CD14-positive monocyte (primary cell): ENCODE measurements at regions of chr14 and their contacts with region 1.

Region 1: GRCh38 chr14:91286530-91286937 is 42.0 kb upstream of the GPR68 start:
- DNase-seq: peak; percentile 49 to 63 (median 62)
- H3K4me3 ChIP-seq: no peak overlapping the region
- H3K4me3 Mint-ChIP-seq: no peak overlapping the region
- H3K27ac ChIP-seq: peak overlapping the region in 1 of 2 donors; percentile 17
- H3K27ac Mint-ChIP-seq: peak overlapping the region in 1 of 7 donors; percentile 75
- H3K4me1 ChIP-seq: no peaks in the 10 kb centered on the region
- H3K4me1 Mint-ChIP-seq: no peaks in the 10 kb centered on the region
- H3K27me3 ChIP-seq: no peaks in the 10 kb centered on the region
- H3K27me3 Mint-ChIP-seq: no peaks in the 10 kb centered on the region
- CTCF ChIP-seq: peak; percentile 90

Region 2: DNA sequence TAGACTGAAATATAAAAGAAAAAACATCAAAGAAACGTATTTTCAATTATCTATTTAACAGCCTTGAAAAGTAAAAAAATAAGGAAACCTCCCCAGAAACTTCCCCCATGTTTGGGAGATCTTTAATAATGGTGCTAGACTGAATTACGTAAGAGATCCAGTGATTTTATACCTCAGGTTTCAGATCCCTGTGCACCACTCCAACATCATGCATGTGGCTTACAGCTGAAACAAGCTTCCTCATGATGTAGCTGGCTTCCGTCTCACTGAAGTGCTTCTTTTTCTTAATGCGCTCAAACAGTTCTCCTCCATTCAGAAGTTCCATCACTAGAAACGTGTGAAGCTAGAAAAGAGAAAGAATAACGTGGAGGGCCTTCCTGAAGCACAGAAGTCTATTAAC is 392.3 kb before region 1 on chr14:
- intact Hi-C with region 1: loop called in 1 of 2 experiments (anchors 10 kb)
- DNase-seq: peak in 1 of 3 donors; percentile 13
- H3K4me3 ChIP-seq: no peak overlapping the region
- H3K4me3 Mint-ChIP-seq: no peak overlapping the region
- H3K27ac ChIP-seq: no peak overlapping the region
- H3K27ac Mint-ChIP-seq: no peak overlapping the region
- H3K4me1 ChIP-seq: no peaks in the 10 kb centered on the region
- H3K4me1 Mint-ChIP-seq: peaks cover 9% of the 10 kb centered on the region
- H3K27me3 ChIP-seq: no peaks in the 10 kb centered on the region
- H3K27me3 Mint-ChIP-seq: no peaks in the 10 kb centered on the region
- CTCF ChIP-seq: no peak

Region 3: GRCh38 chr14:91177073-91178034 is 109.2 kb before region 1 on chr14:
- intact Hi-C with region 1: loop called (anchors 2 kb)
- DNase-seq: peak; percentile 12 to 52 (median 39)
- H3K4me3 ChIP-seq: no peak overlapping the region
- H3K4me3 Mint-ChIP-seq: no peak overlapping the region
- H3K27ac ChIP-seq: no peak overlapping the region
- H3K27ac Mint-ChIP-seq: peak overlapping the region in 2 of 7 donors; percentile 62 to 76
- H3K4me1 ChIP-seq: no peaks in the 10 kb centered on the region
- H3K4me1 Mint-ChIP-seq: no peaks in the 10 kb centered on the region
- H3K27me3 ChIP-seq: no peaks in the 10 kb centered on the region
- H3K27me3 Mint-ChIP-seq: no peaks in the 10 kb centered on the region
- CTCF ChIP-seq: peak; percentile 82

Region 4: GRCh38 chr14:91229743-91230200 is 56.8 kb before region 1 on chr14:
- intact Hi-C with region 1: loop called in 1 of 2 experiments (anchors 10 kb)
- DNase-seq: peak; percentile 51 to 61 (median 58)
- H3K4me3 ChIP-seq: peak overlapping the region in 1 of 3 experiments; percentile 5
- H3K4me3 Mint-ChIP-seq: peak overlapping the region in 1 of 2 donors; percentile 22
- H3K27ac ChIP-seq: peak overlapping the region in 1 of 2 donors; percentile 9
- H3K27ac Mint-ChIP-seq: peak overlapping the region in 4 of 7 donors; percentile 9 to 86 (median 29)
- H3K4me1 ChIP-seq: peaks cover 34 to 43% of the 10 kb centered on the region in 2 donors
- H3K4me1 Mint-ChIP-seq: peaks cover 51% of the 10 kb centered on the region
- H3K27me3 ChIP-seq: no peaks in the 10 kb centered on the region
- H3K27me3 Mint-ChIP-seq: peaks cover 6 to 10% (median 10%) of the 10 kb centered on the region in 3 donors
- CTCF ChIP-seq: no peak

Region 5: DNA sequence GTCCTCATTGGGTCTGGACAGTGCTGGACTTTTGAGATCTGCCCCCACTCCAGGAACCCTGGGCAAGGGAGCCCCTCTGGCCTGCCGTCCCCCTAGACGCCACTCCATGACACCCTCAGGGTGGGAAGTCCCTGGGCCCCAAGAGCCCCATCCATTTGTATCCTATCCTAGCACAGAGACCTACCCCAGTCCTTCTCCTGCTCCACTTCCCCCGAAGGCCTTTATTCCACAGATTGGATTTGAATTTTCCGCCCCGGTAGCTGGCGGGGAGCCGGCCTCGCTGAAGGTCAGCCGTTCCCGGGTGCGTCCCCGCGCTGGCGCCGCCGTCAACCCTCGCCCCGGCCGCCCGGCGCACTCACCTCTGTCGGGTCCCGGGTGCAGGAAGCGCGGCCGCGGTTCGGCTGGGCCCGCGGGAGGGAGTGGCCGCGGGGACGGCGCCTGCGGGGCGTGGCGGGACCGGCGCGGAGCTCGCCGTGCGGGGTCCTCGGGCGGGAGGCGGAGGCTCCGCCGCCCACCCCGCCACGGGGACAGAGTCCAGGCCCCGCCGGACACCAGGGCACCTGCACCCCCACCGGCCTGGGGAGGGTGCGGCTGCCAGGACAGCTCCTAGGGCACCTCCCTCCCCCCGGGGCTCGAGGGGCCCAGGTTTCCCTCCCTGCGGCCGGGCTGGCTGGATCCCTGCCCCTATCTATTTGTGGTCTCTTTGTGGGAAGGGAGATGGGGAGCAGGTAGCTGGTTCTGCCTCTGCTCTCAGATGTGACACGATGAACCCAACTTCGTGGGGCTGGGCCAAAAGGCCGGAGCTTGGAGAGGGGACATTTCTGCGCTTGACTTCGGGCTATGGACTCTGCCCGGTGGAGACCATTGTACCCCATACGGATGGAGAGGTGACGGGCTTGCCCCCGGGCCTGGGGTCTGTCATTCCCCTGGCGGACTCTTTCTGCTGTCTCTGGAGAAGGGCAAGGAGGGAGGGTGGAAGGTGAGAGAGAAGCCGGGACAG is 22.1 kb before region 1 on chr14:
- intact Hi-C with region 1: no loop called
- DNase-seq: peak in 1 of 3 donors; percentile 13
- H3K4me3 ChIP-seq: peak overlapping the region in 1 of 3 experiments; percentile 43
- H3K4me3 Mint-ChIP-seq: peak overlapping the region; percentile 64 to 86
- H3K27ac ChIP-seq: no peak overlapping the region
- H3K27ac Mint-ChIP-seq: no peak overlapping the region
- H3K4me1 ChIP-seq: peaks cover 8 to 16% of the 10 kb centered on the region in 2 donors
- H3K4me1 Mint-ChIP-seq: peaks cover 15% of the 10 kb centered on the region
- H3K27me3 ChIP-seq: peaks cover 27 to 37% of the 10 kb centered on the region in 2 donors
- H3K27me3 Mint-ChIP-seq: peaks cover 31 to 40% (median 37%) of the 10 kb centered on the region in 3 donors
- CTCF ChIP-seq: no peak

Region 6: GRCh38 chr14:91332151-91332985 is 45.8 kb after region 1 on chr14:
- intact Hi-C with region 1: no loop called
- DNase-seq: peak; percentile 43 to 60 (median 55)
- H3K4me3 ChIP-seq: peak overlapping the region in 1 of 3 experiments; percentile 38
- H3K4me3 Mint-ChIP-seq: peak overlapping the region; percentile 61 to 69
- H3K27ac ChIP-seq: peak overlapping the region; percentile 8 to 45
- H3K27ac Mint-ChIP-seq: peak overlapping the region in 6 of 7 donors; percentile 15 to 70 (median 60)
- H3K4me1 ChIP-seq: peaks cover 40 to 42% of the 10 kb centered on the region in 2 donors
- H3K4me1 Mint-ChIP-seq: peaks cover 45% of the 10 kb centered on the region
- H3K27me3 ChIP-seq: no peaks in the 10 kb centered on the region
- H3K27me3 Mint-ChIP-seq: no peaks in the 10 kb centered on the region
- CTCF ChIP-seq: no peak